OCI-LY7 (cell line): ENCODE measurements at regions of chr6 and their contacts with region 1.

Region 1: DNA sequence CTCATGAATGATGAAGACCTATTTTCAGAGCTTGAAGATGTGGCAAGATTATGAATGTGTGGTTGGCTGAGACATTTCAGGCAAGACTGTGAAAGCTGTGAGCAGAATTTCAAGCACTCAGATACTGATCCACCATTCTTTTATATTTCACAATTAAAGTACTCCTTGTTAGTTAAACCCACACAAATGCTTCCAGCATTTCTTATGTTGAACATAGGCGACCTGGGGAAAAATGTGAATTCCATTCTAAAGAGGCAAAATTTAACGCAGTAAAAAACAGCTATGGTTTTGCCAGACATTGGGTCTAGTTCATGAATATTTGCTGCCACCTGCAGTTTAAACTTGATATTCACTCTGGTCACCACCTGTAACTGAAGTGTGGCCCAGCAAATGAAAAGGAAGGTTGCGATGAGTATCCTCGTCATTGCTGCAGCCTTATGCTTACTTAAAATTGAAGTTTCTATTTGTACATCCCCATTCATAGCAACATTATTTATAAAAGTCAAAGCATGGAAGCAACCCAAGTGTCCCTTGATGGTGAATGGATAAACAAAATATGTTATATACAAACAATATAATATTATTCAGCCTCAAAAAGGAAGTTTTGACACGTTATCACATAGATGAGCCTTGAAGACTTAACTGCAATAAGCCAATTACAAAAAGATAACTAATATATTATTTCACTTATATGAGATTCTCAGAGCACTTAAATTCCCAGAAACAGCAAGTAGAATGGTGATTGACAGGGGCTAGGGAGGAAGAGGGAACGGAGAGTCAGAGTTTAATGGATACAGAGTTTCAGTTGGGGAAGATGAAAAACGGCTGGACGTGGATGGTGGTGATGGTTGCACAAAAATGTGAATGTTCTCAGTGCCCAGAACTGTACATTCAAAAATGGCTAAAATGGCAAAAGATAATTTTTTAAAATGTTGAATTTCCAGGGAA is 32.4 kb upstream of the FAM184A start:
- DNase-seq: peak; percentile 54
- H3K4me3 ChIP-seq: no peak overlapping the region
- H3K27ac ChIP-seq: no peak overlapping the region
- H3K4me1 ChIP-seq: no peaks in the 10 kb centered on the region
- CTCF ChIP-seq: peak; percentile 80

Region 2: GRCh38 chr6:118800394-118801071 is 310.3 kb before region 1 on chr6:
- CTCF ChIA-PET with region 1: no interaction called
- POLR2A ChIA-PET with region 1: no interaction called
- intact Hi-C with region 1: loop called (anchors 5 kb)
- DNase-seq: peak; percentile 86
- H3K4me3 ChIP-seq: no peak overlapping the region
- H3K27ac ChIP-seq: no peak overlapping the region
- H3K4me1 ChIP-seq: no peaks in the 10 kb centered on the region
- CTCF ChIP-seq: peak; percentile 95

Region 3: DNA sequence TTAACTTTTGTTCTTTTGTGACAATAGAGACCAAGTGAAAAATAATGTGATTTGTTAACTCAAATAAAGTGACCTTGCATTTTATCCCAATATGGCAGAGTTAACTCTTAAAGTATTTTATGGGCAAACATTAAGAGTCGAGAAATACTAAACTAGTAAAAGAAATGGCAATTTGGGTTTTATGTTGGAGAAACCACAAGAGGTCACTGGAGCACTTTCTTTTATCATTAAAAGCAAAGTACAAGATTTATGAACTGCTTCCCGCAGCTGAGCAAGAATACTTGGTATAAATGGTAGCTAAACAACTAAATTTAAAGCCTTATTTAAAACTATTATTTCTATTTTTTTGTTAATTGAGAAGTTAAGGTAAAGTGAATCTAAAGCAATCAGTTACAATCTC is 142.5 kb before region 1 on chr6:
- CTCF ChIA-PET with region 1: no interaction called
- POLR2A ChIA-PET with region 1: no interaction called
- intact Hi-C with region 1: loop called (anchors 2 kb)
- DNase-seq: peak; percentile 5
- H3K4me3 ChIP-seq: no peak overlapping the region
- H3K27ac ChIP-seq: no peak overlapping the region
- H3K4me1 ChIP-seq: no peaks in the 10 kb centered on the region
- CTCF ChIP-seq: peak; percentile 65